WTC11 (cell line): ENCODE measurements at regions of chr20 and their contacts with region 1.

Region 1: GRCh38 chr20:34312544-34313217 is 9.5 kb upstream of the AHCY start:
- DNase-seq: peak; percentile 95
- ATAC-seq: peak; percentile 90
- H3K4me3 Mint-ChIP-seq: peak overlapping the region; percentile 81
- H3K27ac Mint-ChIP-seq: no peak overlapping the region
- H3K4me1 Mint-ChIP-seq: peaks cover 7% of the 10 kb centered on the region; the same call in 1 of the 2 replicates
- H3K27me3 Mint-ChIP-seq: peaks cover 16% of the 10 kb centered on the region
- CTCF ChIP-seq: peak; percentile 93

Region 2: DNA sequence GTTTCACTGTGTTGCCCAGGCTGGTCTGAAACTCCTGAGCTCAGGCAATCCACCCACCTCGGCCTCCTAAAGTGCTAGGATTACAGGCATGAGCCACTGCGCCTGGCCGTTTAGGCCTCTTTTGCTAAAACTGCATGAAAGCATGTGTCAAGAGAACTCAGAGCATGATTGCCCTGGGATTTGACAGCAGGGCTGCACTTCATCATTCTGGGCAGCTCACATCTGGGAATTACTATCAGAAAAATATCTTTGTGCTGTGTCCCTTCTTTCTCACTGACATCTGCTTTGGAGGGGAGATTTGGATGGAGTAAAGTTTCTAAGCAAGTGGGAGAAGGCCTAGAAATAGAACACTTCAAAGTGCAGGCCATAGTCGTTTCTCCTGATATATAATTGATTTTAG is 141.0 kb before region 1 on chr20:
- CTCF ChIA-PET with region 1: no interaction called
- POLR2A ChIA-PET with region 1: no interaction called
- DNase-seq: no peak
- ATAC-seq: no peak
- H3K4me3 Mint-ChIP-seq: no peak overlapping the region
- H3K27ac Mint-ChIP-seq: no peak overlapping the region
- H3K4me1 Mint-ChIP-seq: no peaks in the 10 kb centered on the region
- H3K27me3 Mint-ChIP-seq: no peaks in the 10 kb centered on the region
- CTCF ChIP-seq: no peak

Region 3: DNA sequence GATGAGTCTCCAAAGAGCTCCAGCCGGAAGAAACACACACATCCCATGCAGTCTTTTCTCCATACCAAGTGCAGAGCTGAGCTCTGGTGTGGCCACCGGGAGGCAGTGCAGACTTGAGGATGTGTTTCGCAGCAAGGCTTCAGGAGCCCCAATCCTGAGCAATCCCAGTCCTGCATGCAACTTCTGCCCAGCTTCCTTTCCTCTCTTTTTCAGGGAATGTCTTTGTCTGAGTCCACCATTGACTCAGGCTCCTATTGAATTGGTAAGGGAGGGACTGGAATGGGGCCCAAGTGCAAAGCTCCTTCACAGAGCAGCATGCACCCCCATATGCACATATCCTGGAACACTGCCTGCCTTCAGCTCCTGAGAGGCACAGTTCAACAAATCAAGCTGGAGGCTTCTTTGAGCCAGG is 122.0 kb before region 1 on chr20:
- CTCF ChIA-PET with region 1: interaction called, 36 read pairs
- POLR2A ChIA-PET with region 1: no interaction called
- DNase-seq: peak; percentile 82
- ATAC-seq: peak; percentile 99
- H3K4me3 Mint-ChIP-seq: no peak overlapping the region
- H3K27ac Mint-ChIP-seq: no peak overlapping the region
- H3K4me1 Mint-ChIP-seq: peaks cover 22% of the 10 kb centered on the region
- H3K27me3 Mint-ChIP-seq: no peaks in the 10 kb centered on the region
- CTCF ChIP-seq: peak; percentile 49; the same call in 1 of the 2 replicates

Region 4: GRCh38 chr20:34343458-34344211 is 31.0 kb after region 1 on chr20:
- CTCF ChIA-PET with region 1: interaction called, 83 read pairs
- POLR2A ChIA-PET with region 1: no interaction called
- DNase-seq: no peak
- ATAC-seq: 0 out of 2 replicates have a peak, but pooled peaks have one; percentile 30
- H3K4me3 Mint-ChIP-seq: no peak overlapping the region
- H3K27ac Mint-ChIP-seq: no peak overlapping the region
- H3K4me1 Mint-ChIP-seq: peaks cover 16% of the 10 kb centered on the region
- H3K27me3 Mint-ChIP-seq: no peaks in the 10 kb centered on the region
- CTCF ChIP-seq: no peak

Region 5: DNA sequence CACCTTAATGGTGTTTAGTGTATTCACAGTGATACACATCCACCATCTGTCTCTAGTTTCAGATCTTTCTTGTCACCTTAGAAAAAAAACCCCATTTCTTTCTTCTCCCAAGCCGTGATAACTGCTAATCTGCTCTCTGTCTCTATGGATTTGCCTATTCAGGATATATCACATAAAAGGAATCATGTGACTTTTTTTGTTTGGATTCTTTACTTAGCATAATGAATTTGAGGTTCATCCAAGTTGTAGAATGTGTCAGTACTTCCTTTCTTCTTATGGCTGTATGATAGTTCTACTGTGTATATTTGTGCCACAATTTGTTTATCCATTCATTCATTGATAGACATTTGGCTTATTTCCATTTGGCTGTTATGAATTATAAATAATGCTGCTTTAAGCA is 107.5 kb after region 1 on chr20:
- CTCF ChIA-PET with region 1: interaction called, 30 read pairs
- POLR2A ChIA-PET with region 1: no interaction called
- DNase-seq: no peak
- ATAC-seq: no peak
- H3K4me3 Mint-ChIP-seq: no peak overlapping the region
- H3K27ac Mint-ChIP-seq: peak overlapping the region; percentile 42
- H3K4me1 Mint-ChIP-seq: no peaks in the 10 kb centered on the region
- H3K27me3 Mint-ChIP-seq: no peaks in the 10 kb centered on the region
- CTCF ChIP-seq: no peak

Region 6: DNA sequence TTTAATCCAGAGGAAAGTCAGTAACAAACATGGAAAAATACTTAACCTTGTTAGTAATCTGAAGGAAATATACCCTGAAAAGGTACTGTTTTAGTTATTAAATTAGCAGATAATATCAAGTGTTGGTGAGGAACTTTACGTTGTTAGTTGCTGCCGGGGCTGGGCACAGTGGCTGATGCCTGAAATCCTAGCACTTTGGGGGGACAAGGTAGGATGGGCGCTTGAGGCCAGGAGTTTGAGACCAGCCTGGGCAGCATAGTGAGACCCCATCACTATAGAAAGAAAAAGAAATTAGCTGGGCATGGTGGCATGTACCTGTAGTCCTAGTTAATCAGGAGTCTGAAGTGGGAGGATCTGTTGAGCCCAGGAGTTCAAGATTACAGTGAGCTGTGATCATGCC is 130.9 kb after region 1 on chr20:
- CTCF ChIA-PET with region 1: interaction called, 15 read pairs
- POLR2A ChIA-PET with region 1: interaction called, 3 read pairs
- DNase-seq: no peak
- ATAC-seq: no peak
- H3K4me3 Mint-ChIP-seq: no peak overlapping the region
- H3K27ac Mint-ChIP-seq: no peak overlapping the region
- H3K4me1 Mint-ChIP-seq: no peaks in the 10 kb centered on the region
- H3K27me3 Mint-ChIP-seq: no peaks in the 10 kb centered on the region
- CTCF ChIP-seq: no peak

Region 7: GRCh38 chr20:34522969-34523871 is 210.5 kb after region 1 on chr20:
- CTCF ChIA-PET with region 1: interaction called, 104 read pairs
- POLR2A ChIA-PET with region 1: interaction called, 3 read pairs
- DNase-seq: peak; percentile 83
- ATAC-seq: peak; percentile 97
- H3K4me3 Mint-ChIP-seq: no peak overlapping the region
- H3K27ac Mint-ChIP-seq: peak overlapping the region; percentile 84
- H3K4me1 Mint-ChIP-seq: peaks cover 12% of the 10 kb centered on the region
- H3K27me3 Mint-ChIP-seq: no peaks in the 10 kb centered on the region
- CTCF ChIP-seq: peak; percentile 41; the same call in 1 of the 2 replicates